ENCODE measurements at regions of chr1 and their contacts with region 1.

Region 1: DNA sequence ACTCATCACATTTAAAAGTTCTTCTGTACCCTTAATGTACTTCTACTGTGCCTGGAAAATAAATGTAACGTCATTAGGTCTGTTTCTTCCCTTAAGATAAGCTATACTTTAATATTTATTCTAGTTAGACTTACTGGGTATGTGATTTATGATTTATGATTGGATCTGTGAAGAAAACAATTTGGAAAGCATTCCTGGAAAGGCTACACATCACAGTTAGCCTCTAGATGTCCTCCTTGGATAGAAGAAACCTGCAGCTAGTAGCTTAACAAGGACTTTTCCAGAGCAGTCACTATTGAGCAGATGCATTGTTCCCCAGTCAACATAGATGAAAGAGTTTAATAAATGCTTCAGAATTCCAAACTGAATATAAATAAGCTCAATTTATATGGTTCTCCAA is 22.2 kb upstream of the ABL2 start:
- DNase-seq: no peak
- H3K4me3 ChIP-seq: no peak overlapping the region
- H3K27ac ChIP-seq: no peak overlapping the region
- H3K4me1 ChIP-seq: no peaks in the 10 kb centered on the region
- H3K27me3 ChIP-seq: no peaks in the 10 kb centered on the region
- CTCF ChIP-seq: no peak
- POLR2A ChIP-seq: no peak

Region 2: DNA sequence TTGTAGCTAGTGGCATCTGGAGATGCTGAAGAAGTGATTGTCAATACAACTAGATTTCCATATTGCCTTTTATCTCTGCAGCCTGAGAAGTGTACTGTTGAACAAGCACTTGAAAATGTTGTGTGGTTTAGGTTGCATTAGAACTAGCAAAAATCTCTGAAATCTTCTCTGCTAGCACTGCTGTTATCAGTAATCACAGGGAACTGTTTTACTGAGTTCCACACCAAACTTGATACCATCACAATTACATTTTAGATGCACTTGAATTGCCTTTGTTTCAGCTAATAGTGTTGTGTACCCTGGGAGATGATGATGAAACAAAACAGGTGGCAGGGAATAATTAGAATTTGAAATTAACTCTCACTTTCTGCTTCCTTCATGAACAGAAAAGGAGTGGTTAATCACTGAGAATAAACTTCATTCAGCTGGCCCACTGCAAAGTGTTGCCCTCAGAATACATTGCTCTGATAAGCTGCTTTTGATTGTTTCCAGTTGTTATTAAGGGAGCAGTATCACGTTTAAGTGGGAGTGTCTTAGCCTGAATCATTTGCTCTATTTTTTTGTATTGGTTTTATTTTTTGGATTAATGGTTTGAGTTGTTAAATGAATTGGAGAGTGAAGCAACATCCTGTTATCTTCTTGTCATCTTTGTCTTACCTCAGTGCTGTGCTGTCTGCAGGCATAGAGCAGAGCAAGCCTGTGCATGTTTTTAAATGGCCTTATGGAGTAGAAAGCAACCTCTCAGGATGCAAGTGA is 213.0 kb before region 1 on chr1:
- intact Hi-C with region 1: no loop called
- DNase-seq: no peak
- H3K4me3 ChIP-seq: no peak overlapping the region
- H3K27ac ChIP-seq: no peak overlapping the region
- H3K4me1 ChIP-seq: peaks cover 33% of the 10 kb centered on the region
- H3K27me3 ChIP-seq: no peaks in the 10 kb centered on the region
- CTCF ChIP-seq: no peak
- POLR2A ChIP-seq: no peak

Region 3: GRCh38 chr1:179142889-179143299 is 108.8 kb before region 1 on chr1:
- intact Hi-C with region 1: no loop called
- DNase-seq: no peak
- H3K4me3 ChIP-seq: peak overlapping the region; percentile 24 to 37
- H3K27ac ChIP-seq: peak overlapping the region; percentile 85
- H3K4me1 ChIP-seq: peaks cover 58% of the 10 kb centered on the region
- H3K27me3 ChIP-seq: no peaks in the 10 kb centered on the region
- CTCF ChIP-seq: no peak
- POLR2A ChIP-seq: peak in 1 of 2 donors; percentile 57

Region 4: DNA sequence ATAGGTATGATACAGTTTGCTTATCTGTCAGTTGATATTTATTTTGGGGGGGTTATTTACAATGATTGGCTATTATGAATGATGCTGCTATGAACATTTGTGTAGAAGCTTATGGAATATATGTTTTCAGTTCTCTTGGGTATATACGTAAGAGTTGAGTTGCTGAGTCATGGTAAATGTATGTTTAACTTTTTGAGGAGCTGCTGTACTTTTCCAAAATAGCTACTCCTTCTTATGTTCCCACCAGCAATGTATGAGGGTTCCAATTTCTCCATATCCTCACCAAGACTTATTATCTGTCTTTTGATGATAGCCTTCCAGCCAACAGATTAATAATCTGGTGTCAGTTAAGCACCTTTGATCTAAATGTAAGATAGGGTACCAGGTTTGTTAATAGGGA is 53.8 kb after region 1 on chr1:
- intact Hi-C with region 1: loop called (anchors 10 kb)
- DNase-seq: no peak
- H3K4me3 ChIP-seq: no peak overlapping the region
- H3K27ac ChIP-seq: no peak overlapping the region
- H3K4me1 ChIP-seq: peaks cover 6% of the 10 kb centered on the region
- H3K27me3 ChIP-seq: no peaks in the 10 kb centered on the region
- CTCF ChIP-seq: no peak
- POLR2A ChIP-seq: no peak

Measured in vagina (tissue), 2 donors.